Activated CD4-positive, alpha-beta memory T cell treated with anti-CD3 and anti-CD28 coated beads, Interleukin-2, amount 10 ng/mL, durations not matched to agents 7 days and 5 days (primary cell): ENCODE measurements at regions of chr12 and their contacts with region 1.

Region 1: GRCh38 chr12:48814262-48815125 is 3.8 kb upstream of the CACNB3 start:
- DNase-seq: peak; percentile 86
- H3K4me3 Mint-ChIP-seq: peak overlapping the region; percentile 98
- H3K27ac Mint-ChIP-seq: peak overlapping the region; percentile 59
- H3K4me1 Mint-ChIP-seq: peaks cover 40% of the 10 kb centered on the region
- H3K27me3 Mint-ChIP-seq: peaks cover 18% of the 10 kb centered on the region

Region 2: GRCh38 chr12:48681738-48682532 is 132.6 kb before region 1 on chr12 and contains the start of gene KANSL2:
- CTCF ChIA-PET with region 1: interaction called, 3 read pairs
- POLR2A ChIA-PET with region 1: interaction called, 15 read pairs
- DNase-seq: peak; percentile 99
- H3K4me3 Mint-ChIP-seq: peak within 1 kb of the TSS; percentile 99
- H3K27ac Mint-ChIP-seq: peak within 1 kb of the TSS; percentile 91
- H3K4me1 Mint-ChIP-seq: peaks cover 44% of the 10 kb centered on the region
- H3K27me3 Mint-ChIP-seq: no peaks in the 10 kb centered on the region
- total RNA-seq, gene KANSL2: 40.3 to 42.2 TPM

Region 3: GRCh38 chr12:48728807-48729206 is 85.7 kb before region 1 on chr12:
- CTCF ChIA-PET with region 1: no interaction called
- POLR2A ChIA-PET with region 1: no interaction called
- DNase-seq: no peak
- H3K4me3 Mint-ChIP-seq: no peak overlapping the region
- H3K27ac Mint-ChIP-seq: no peak overlapping the region
- H3K4me1 Mint-ChIP-seq: no peaks in the 10 kb centered on the region
- H3K27me3 Mint-ChIP-seq: peaks cover 4% of the 10 kb centered on the region

Region 4: GRCh38 chr12:48758221-48758620 is 56.3 kb before region 1 on chr12:
- CTCF ChIA-PET with region 1: interaction called, 16 read pairs
- POLR2A ChIA-PET with region 1: no interaction called
- DNase-seq: no peak
- H3K4me3 Mint-ChIP-seq: no peak overlapping the region
- H3K27ac Mint-ChIP-seq: no peak overlapping the region
- H3K4me1 Mint-ChIP-seq: no peaks in the 10 kb centered on the region
- H3K27me3 Mint-ChIP-seq: no peaks in the 10 kb centered on the region

Region 5: DNA sequence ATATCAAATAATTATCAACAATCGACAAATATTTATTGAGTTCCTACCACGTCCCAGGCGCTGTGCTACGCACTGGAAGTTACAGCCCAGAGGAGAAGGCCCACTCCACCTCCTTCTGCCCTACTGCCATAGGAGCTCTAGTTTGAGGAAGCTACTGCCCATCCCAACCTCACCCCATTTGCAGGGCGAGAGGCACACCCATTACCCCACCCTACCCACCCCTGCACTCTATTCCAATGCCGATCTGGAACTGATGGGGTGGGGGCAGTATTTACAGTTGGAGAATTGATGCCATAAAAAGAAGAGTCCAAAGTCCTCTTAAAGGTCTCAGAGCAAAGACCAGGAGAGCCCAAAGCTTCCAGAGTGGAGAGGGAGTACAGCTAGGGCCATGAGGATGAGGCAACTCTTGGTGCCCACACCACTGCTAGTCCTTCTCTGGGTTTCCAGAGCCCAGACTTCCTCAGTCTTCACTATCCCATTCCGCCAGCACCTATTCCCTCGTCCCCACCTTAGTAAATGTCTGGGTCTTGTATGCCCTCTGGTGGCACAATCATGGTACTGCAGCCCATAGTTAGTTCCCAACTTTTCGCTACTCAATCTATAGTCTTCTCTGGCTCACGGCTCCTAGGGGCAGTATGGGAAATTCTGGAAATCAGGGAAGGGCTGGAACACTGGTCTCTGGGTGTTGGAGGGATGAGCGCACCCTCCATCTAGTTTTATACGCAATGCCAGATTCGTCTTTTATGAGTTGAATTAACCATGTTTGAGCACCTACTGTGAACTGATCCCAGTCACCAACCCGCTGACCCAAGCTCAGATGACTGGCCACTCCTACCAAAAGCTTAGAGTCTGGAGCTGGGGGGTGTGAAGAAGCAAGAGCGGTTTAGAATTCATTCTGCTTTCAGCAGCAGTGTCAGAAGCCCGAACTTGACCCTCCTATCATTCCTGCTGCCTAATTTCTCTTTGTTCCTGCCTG is 18.7 kb before region 1 on chr12:
- CTCF ChIA-PET with region 1: interaction called, 32 read pairs
- POLR2A ChIA-PET with region 1: interaction called, 3 read pairs
- DNase-seq: peak; percentile 65
- H3K4me3 Mint-ChIP-seq: no peak overlapping the region
- H3K27ac Mint-ChIP-seq: no peak overlapping the region
- H3K4me1 Mint-ChIP-seq: peaks cover 9% of the 10 kb centered on the region
- H3K27me3 Mint-ChIP-seq: peaks cover 9% of the 10 kb centered on the region

Region 6: DNA sequence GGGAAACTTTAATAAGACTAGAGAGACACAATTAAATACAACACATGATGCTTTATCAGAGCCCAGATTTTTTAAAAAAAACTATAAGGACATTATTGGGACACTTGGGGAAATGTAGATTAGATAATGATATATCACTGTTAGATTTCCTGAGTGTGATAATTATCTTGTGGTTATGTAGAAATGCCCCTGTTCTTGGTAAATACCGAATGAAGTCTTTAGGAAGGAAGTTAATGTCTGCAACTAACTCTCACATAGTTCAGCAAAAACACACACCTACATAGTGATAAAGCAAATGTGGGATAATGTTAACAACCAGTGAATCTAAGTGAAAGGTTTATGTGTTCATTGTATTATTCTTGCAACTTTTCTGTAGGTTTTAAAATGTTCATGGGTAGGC is 10.8 kb before region 1 on chr12:
- CTCF ChIA-PET with region 1: interaction called, 12 read pairs
- POLR2A ChIA-PET with region 1: interaction called, 3 read pairs
- DNase-seq: no peak
- H3K4me3 Mint-ChIP-seq: no peak overlapping the region
- H3K27ac Mint-ChIP-seq: no peak overlapping the region
- H3K4me1 Mint-ChIP-seq: peaks cover 6% of the 10 kb centered on the region
- H3K27me3 Mint-ChIP-seq: peaks cover 3% of the 10 kb centered on the region

Region 7: GRCh38 chr12:48881686-48882314 is 67.3 kb after region 1 on chr12:
- CTCF ChIA-PET with region 1: no interaction called
- POLR2A ChIA-PET with region 1: no interaction called
- DNase-seq: no peak
- H3K4me3 Mint-ChIP-seq: no peak overlapping the region
- H3K27ac Mint-ChIP-seq: no peak overlapping the region
- H3K4me1 Mint-ChIP-seq: peaks cover 6% of the 10 kb centered on the region
- H3K27me3 Mint-ChIP-seq: peaks cover 36% of the 10 kb centered on the region